Psoas muscle (tissue), 8 donors: ENCODE measurements at regions of chr7 and their contacts with region 1.

Region 1: DNA sequence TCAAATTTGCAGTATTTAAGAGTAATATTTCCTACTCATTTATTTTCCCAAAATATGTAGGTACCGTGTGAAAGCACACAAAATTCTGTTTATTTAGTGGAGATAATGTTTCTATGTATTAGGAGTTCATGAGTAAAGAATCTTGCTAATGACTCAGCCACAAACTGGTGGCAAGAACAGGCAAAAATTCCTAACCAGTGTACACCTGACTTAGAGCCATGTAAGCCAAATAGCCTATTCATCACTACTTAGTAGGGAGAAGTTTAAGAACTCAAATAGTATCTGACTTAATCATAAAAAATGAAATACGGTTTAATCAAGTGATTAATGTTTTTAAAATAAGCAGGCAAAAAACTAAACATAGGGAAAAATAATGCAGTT is 169.0 kb downstream of the SRPK2 start:
- DNase-seq: no peak
- ATAC-seq: peak; percentile 71 to 84 (median 80)
- H3K4me3 ChIP-seq: no peak overlapping the region
- H3K27ac ChIP-seq: peak overlapping the region; percentile 47
- H3K4me1 ChIP-seq: peaks cover 46% of the 10 kb centered on the region
- H3K27me3 ChIP-seq: no peaks in the 10 kb centered on the region
- CTCF ChIP-seq: no peak

Region 2: DNA sequence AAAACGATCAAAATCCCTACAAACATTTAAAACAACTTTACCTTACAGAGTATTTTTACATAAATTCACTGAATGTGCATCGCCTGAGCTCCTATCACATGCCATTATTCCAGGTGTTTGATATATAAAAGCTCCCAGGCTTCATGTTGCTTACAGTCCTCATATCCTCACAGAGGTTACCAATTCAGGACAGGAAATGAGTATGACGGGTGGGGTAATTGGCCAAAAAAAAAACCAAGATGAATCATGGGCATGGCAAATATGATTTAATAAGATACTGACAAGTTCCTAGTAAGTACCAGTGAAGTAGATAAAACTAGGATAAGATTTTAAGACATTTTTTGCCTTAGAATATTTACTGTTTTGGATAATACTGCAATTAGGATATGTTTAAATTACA is 69.9 kb before region 1 on chr7:
- intact Hi-C with region 1: no loop called
- DNase-seq: no peak
- ATAC-seq: peak in 2 of 4 donors; percentile 32 to 35
- H3K4me3 ChIP-seq: no peak overlapping the region
- H3K27ac ChIP-seq: no peak overlapping the region
- H3K4me1 ChIP-seq: peaks cover 12% of the 10 kb centered on the region
- H3K27me3 ChIP-seq: no peaks in the 10 kb centered on the region
- CTCF ChIP-seq: no peak

Region 3: DNA sequence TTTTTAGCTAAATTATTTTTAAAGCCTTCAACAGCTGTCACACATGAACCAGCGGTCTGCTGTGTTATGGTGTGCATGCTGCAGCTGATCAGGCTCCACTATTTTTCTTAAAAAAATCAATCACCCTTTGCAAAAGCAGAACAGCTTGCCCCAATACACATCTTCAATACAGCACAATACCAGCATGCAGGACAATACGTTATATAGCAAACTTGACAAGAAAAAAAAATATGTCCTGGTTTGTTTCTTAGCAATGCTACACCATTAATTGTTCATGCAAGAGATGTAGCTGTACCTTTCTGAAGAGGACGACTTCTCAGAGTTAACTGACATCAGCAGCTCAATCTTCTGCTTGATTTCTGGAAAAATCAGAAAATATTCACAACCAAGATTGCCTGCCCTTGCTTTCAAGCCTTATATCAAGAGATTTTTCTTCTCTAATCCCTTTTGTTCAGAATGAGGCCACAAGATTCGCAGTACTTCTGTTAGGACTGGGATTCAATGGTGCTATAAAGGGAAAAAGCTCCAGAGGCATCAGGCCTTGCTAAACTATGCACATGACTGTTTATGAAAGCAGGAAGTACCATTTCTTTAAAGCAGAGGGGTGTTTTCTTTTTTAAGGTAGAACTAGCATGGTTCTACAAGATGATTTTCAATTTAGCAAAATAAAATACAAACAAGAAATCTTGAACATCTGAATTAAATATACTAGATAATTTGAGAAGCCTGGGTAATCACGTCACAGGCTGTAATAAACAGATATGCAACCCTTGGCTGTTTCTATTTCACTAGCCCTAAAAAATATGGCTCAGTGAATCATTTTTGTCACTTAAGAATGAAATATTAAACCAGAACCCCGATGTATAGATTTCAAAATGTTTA is 49.0 kb after region 1 on chr7:
- intact Hi-C with region 1: loop called in 1 of 2 experiments (anchors 5 kb)
- DNase-seq: no peak
- ATAC-seq: peak; percentile 86 to 93 (median 89)
- H3K4me3 ChIP-seq: peak overlapping the region; percentile 73
- H3K27ac ChIP-seq: peak overlapping the region; percentile 90
- H3K4me1 ChIP-seq: peaks cover 24% of the 10 kb centered on the region
- H3K27me3 ChIP-seq: no peaks in the 10 kb centered on the region
- CTCF ChIP-seq: no peak